Aorta (tissue), 5 donors: ENCODE measurements at regions of chr16 and their contacts with region 1.

Region 1: GRCh38 chr16:1308977-1309885 is at the start of gene UBE2I:
- DNase-seq: peak; percentile 97 to 99
- ATAC-seq: peak; percentile 96
- H3K4me3 ChIP-seq: peak within 1 kb of the TSS; percentile 89 to 94
- H3K27ac ChIP-seq: peak within 1 kb of the TSS; percentile 51 to 97
- H3K4me1 ChIP-seq: peaks cover 0 to 2% of the 10 kb centered on the region in 2 donors
- H3K27me3 ChIP-seq: no peaks in the 10 kb centered on the region
- total RNA-seq, gene UBE2I: 81.7 to 86.7 TPM

Region 2: GRCh38 chr16:1413684-1414531 is 104.7 kb after region 1 on chr16:
- intact Hi-C with region 1: loop called in 1 of 2 experiments (anchors 10 kb)
- DNase-seq: peak; percentile 69 to 86
- ATAC-seq: peak; percentile 70
- H3K4me3 ChIP-seq: peak overlapping the region; percentile 71 to 95
- H3K27ac ChIP-seq: peak overlapping the region in 1 of 2 donors; percentile 37
- H3K4me1 ChIP-seq: no peaks in the 10 kb centered on the region
- H3K27me3 ChIP-seq: no peaks in the 10 kb centered on the region

Region 3: DNA sequence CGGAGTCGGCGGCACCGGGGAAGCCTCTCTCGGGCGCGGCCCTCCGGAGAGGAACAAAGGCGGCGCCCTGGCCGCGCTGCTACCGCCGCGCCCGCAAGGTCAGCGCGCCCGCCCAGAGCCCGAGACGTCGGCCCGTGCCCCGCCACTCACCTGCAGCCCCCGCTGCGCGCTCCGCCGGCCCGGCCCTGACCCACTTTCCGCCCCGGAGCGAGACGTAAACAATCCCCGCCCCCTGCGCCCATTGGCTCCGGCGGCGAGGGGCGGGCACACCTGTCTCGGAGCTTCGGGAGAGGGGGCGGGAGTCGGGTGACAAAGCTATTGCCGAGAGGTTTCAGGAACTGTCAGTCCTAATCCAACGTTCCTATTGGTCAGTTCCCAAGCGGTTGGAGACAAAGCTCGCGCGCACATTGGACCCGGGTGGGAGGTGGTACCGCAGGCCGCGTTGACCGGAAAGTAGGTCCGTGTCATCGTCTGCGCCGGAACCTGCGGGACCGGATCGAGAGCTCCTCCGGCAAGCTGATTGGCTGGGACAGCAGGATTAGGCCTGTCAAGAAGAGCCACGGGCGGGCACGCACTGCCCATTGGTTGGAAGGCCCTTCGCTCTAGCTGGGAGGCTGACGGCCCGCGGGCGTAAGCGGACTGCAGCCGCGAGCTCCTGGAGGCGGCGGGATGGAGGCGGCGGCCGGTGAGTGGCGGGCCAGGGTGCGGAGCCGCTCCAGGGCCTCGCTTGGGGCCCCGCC is 473.3 kb after region 1 on chr16 and contains the starts of genes NUBP2 and SPSB3:
- intact Hi-C with region 1: loop called in 1 of 2 experiments (anchors 5 kb)
- DNase-seq: peak; percentile 100
- ATAC-seq: peak; percentile 96
- H3K4me3 ChIP-seq: peak within 1 kb of the TSS; percentile 77 to 81
- H3K27ac ChIP-seq: peak within 1 kb of the TSS in 1 of 2 donors; percentile 53
- H3K4me1 ChIP-seq: no peaks in the 10 kb centered on the region
- H3K27me3 ChIP-seq: no peaks in the 10 kb centered on the region
- total RNA-seq, gene NUBP2: 30.7 to 32.9 TPM
- total RNA-seq, gene SPSB3: 33.6 to 33.7 TPM